WTC11 (cell line): ENCODE measurements at regions of chr3 and their contacts with region 1.

Region 1: DNA sequence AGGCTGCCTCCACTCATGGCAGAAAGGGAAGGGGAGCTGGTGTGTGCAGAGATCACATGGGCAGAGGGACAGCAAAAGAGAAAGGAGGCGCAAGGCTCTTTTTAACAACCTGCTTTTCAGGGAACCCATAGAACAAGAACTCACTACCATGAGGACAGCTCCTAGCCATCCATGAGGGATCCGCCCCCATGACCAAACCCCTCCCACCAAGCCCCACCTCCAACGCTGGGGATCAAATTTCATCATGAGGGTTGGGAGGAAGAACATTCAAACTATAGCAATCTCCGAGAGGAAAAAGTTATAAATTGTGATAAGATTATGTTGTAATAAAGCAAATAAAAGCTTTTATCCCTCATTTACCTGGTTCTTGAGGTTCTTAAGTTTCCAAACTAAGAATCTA is 84.7 kb upstream of the LMCD1 start:
- DNase-seq: peak; percentile 18
- ATAC-seq: peak; percentile 81
- H3K4me3 Mint-ChIP-seq: no peak overlapping the region
- H3K27ac Mint-ChIP-seq: no peak overlapping the region
- H3K4me1 Mint-ChIP-seq: 0 out of 2 replicates have a peak, but pooled peaks cover 4% of the 10 kb centered on the region
- H3K27me3 Mint-ChIP-seq: no peaks in the 10 kb centered on the region
- CTCF ChIP-seq: no peak

Region 2: DNA sequence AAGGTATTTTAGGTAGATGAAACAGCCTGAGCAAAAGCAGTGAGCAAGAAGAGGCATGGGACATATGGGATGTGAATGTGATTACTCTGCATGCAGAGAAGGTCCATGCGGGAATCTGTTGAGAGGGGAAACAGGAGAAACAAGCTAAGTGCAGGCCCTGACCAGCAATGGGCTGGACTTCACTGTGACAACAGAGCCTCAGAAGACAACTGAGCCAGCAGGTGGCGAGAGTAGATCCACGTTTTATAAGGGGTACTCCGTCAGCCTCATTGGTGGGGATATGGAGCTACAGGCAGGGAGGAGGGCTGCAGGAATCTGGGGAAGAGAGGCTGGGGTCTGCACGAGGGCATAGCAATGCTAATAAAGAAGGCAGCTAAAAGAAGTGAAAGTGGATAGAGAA is 321.2 kb before region 1 on chr3:
- CTCF ChIA-PET with region 1: interaction called, 11 read pairs
- POLR2A ChIA-PET with region 1: no interaction called
- DNase-seq: peak; percentile 53
- ATAC-seq: peak; percentile 99
- H3K4me3 Mint-ChIP-seq: no peak overlapping the region
- H3K27ac Mint-ChIP-seq: no peak overlapping the region
- H3K4me1 Mint-ChIP-seq: peaks cover 13% of the 10 kb centered on the region
- H3K27me3 Mint-ChIP-seq: no peaks in the 10 kb centered on the region
- CTCF ChIP-seq: no peak

Region 3: GRCh38 chr3:8278448-8278847 is 138.5 kb before region 1 on chr3:
- CTCF ChIA-PET with region 1: interaction called, 11 read pairs
- POLR2A ChIA-PET with region 1: no interaction called
- DNase-seq: no peak
- ATAC-seq: peak; percentile 45
- H3K4me3 Mint-ChIP-seq: no peak overlapping the region
- H3K27ac Mint-ChIP-seq: no peak overlapping the region
- H3K4me1 Mint-ChIP-seq: peaks cover 42% of the 10 kb centered on the region
- H3K27me3 Mint-ChIP-seq: no peaks in the 10 kb centered on the region; the same call in 1 of the 2 replicates
- CTCF ChIP-seq: no peak

Region 4: DNA sequence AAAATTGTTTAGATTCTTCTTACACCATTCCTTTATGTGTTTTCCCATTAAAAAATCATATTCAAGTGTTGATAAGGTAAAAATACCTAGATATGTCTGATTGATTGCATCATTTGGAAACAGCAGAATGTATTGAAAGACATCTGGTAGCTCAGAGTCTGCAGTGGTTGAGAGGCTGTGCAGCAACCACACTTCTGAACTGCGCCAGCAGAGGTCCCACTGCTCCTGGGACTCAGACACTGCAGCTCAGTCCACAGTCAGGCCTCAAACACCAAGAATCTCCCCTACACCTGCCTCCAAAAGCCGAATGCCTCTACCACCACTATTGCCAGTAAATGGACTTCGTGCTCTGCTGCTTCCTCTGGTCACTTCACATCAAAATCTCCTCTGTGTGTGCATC is 92.2 kb before region 1 on chr3:
- CTCF ChIA-PET with region 1: interaction called, 57 read pairs
- POLR2A ChIA-PET with region 1: no interaction called
- DNase-seq: peak; percentile 64
- ATAC-seq: peak; percentile 92
- H3K4me3 Mint-ChIP-seq: no peak overlapping the region
- H3K27ac Mint-ChIP-seq: no peak overlapping the region
- H3K4me1 Mint-ChIP-seq: no peaks in the 10 kb centered on the region; the same call in 1 of the 2 replicates
- H3K27me3 Mint-ChIP-seq: no peaks in the 10 kb centered on the region
- CTCF ChIP-seq: no peak

Region 5: DNA sequence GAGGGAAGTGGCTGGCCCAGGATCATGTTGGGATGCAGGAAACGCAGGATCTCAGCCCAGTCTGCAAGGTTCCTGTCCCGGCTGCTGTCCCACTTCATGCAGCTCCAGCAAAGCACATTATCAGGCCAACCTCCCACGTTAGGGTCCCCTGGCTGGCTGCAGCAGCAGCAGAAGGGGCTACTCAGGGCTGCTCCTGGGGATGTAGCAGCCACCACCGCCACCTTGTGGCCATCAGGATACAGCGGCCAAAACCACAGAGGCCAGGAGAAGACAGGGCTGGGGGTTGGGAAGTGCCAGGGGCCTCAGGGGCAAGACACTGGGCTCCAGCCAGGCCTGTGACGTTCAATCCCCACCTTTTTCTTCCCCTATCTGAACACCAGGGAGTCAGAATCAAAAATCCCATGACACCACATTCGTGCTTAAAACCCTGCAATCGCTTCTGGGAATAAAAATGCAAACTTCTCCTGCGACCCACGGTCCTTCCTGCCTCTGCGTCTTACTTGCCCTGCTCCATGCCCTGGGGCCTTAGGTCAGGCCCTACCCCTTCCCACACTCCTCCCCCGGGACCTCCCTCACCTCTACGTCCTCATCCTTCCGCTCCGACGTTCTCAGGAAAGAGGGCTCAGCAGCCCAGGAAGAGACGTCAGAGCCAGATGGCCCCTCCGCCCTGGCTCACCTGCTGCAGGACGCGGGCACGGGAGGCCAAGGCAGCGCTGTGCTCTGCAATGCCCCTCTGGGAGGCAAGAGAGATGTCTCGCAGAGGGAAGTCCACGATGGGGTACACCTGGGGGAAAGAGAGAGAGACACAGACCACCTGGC is 206.1 kb after region 1 on chr3:
- CTCF ChIA-PET with region 1: interaction called, 11 read pairs
- POLR2A ChIA-PET with region 1: no interaction called
- DNase-seq: peak; percentile 87
- ATAC-seq: peak; percentile 96
- H3K4me3 Mint-ChIP-seq: peak overlapping the region; percentile 2; the same call in 1 of the 2 replicates
- H3K27ac Mint-ChIP-seq: peak overlapping the region; percentile 39; the same call in 1 of the 2 replicates
- H3K4me1 Mint-ChIP-seq: peaks cover 11% of the 10 kb centered on the region
- H3K27me3 Mint-ChIP-seq: peaks cover 4% of the 10 kb centered on the region; the same call in 1 of the 2 replicates
- CTCF ChIP-seq: peak; percentile 82